ENCODE measurements at regions of chr1 and their contacts with region 1.

Region 1: DNA sequence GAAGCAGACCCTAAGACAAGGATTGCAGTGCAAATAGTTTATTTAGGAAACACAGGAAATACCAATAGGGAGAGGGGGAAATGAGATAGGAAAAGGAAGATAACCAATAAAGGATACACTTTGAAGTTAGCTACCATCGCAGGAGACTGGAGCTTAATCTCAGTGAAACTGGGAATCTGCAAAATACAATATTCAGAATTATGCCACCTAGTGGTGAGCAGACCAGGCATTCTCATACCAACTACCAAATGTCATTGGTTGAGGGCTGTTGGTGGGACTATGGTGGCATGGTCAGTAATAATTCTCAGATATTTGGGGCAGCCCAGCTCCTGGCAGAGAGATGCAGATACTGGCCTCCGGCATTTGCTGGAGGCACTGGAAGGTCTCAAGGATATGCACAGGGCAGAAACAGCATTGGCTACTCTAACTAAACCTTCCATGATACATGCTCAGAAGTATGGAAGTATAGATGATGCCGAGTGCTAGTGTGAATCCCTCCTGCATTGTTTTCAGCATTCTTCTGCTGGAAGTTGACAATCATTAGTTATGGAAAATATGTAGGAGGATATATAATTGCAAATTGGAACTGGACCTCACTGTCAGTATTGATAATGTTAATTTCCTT is 11.8 kb upstream of the ZFP69B start:
- DNase-seq: no peak
- H3K4me3 Mint-ChIP-seq: no peak overlapping the region
- H3K27ac Mint-ChIP-seq: no peak overlapping the region
- H3K4me1 Mint-ChIP-seq: no peaks in the 10 kb centered on the region
- H3K27me3 Mint-ChIP-seq: no peaks in the 10 kb centered on the region

Region 2: GRCh38 chr1:40107290-40108262 is 330.9 kb before region 1 on chr1:
- CTCF ChIA-PET with region 1: no interaction called
- POLR2A ChIA-PET with region 1: no interaction called
- intact Hi-C with region 1: no loop called
- DNase-seq: no peak
- H3K4me3 Mint-ChIP-seq: no peak overlapping the region
- H3K27ac Mint-ChIP-seq: no peak overlapping the region
- H3K4me1 Mint-ChIP-seq: peaks cover 6% of the 10 kb centered on the region
- H3K27me3 Mint-ChIP-seq: peaks cover 25% of the 10 kb centered on the region

Region 3: GRCh38 chr1:40425198-40425597 is 13.3 kb before region 1 on chr1:
- CTCF ChIA-PET with region 1: interaction called, 14 read pairs
- POLR2A ChIA-PET with region 1: interaction called, 4 read pairs
- intact Hi-C with region 1: no loop called
- DNase-seq: no peak
- H3K4me3 Mint-ChIP-seq: no peak overlapping the region
- H3K27ac Mint-ChIP-seq: peak overlapping the region; percentile 3
- H3K4me1 Mint-ChIP-seq: peaks cover 6% of the 10 kb centered on the region
- H3K27me3 Mint-ChIP-seq: no peaks in the 10 kb centered on the region

Region 4: DNA sequence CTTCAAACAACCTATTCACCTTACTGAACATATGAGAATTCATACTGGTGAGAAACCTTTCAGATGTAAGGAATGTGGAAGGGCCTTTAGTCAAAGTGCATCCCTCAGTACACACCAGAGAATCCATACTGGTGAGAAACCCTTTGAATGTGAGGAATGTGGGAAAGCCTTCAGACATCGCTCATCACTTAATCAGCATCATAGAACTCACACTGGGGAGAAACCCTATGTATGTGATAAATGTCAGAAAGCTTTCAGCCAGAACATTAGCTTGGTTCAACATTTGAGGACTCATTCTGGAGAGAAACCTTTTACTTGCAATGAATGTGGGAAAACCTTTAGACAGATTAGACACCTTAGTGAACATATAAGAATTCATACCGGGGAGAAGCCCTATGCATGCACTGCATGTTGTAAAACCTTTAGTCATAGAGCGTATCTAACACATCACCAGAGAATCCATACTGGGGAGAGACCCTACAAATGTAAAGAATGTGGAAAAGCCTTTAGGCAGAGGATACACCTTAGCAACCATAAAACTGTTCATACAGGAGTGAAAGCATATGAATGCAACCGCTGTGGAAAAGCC is 56.9 kb after region 1 on chr1:
- CTCF ChIA-PET with region 1: no interaction called
- POLR2A ChIA-PET with region 1: no interaction called
- intact Hi-C with region 1: no loop called
- DNase-seq: no peak
- H3K4me3 Mint-ChIP-seq: no peak overlapping the region
- H3K27ac Mint-ChIP-seq: no peak overlapping the region
- H3K4me1 Mint-ChIP-seq: peaks cover 2% of the 10 kb centered on the region
- H3K27me3 Mint-ChIP-seq: no peaks in the 10 kb centered on the region